ENCODE measurements at regions of chr22 and their contacts with region 1.

Region 1: DNA sequence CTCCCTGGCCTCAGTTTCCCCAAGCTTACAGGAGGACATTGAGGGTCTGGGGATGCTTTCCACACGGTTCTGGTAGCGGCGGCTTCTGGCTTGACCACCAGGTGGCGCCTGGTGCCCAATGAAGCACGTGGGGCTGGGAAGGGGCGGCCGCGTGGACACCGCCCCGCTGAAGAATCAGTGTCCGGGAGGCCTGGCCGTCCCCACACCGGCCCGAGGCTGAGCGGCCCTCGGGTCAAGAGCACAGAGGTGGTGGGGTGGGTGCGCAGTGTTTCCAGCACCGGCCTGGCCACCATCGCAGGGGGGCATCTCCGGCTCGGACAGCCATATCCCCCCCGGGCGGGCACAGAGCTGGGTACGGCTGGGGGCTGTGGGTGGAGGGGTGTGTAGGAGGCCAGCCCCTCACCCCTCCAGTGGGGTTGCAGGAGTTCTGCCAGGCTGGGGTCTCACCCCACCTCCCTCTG is 27.8 kb upstream of the PPARA start:
- DNase-seq: peak; percentile 88
- ATAC-seq: peak; percentile 75

Region 2: GRCh38 chr22:46296257-46297150 is 174.0 kb after region 1 on chr22 and contains the start of gene GTSE1:
- intact Hi-C with region 1: loop called (anchors 5 kb)
- DNase-seq: peak; percentile 100
- ATAC-seq: peak; percentile 98
- total RNA-seq, gene GTSE1: 0.43 TPM

Region 3: GRCh38 chr22:46317646-46318045 is 195.1 kb after region 1 on chr22:
- intact Hi-C with region 1: loop called (anchors 2 kb)
- DNase-seq: no peak
- ATAC-seq: no peak

Region 4: GRCh38 chr22:46542011-46542985 is 419.8 kb after region 1 on chr22:
- intact Hi-C with region 1: loop called (anchors 10 kb)
- DNase-seq: peak; percentile 79
- ATAC-seq: peak; percentile 76